A549 (cell line): ENCODE measurements at regions of chr15 and their contacts with region 1.

Region 1: DNA sequence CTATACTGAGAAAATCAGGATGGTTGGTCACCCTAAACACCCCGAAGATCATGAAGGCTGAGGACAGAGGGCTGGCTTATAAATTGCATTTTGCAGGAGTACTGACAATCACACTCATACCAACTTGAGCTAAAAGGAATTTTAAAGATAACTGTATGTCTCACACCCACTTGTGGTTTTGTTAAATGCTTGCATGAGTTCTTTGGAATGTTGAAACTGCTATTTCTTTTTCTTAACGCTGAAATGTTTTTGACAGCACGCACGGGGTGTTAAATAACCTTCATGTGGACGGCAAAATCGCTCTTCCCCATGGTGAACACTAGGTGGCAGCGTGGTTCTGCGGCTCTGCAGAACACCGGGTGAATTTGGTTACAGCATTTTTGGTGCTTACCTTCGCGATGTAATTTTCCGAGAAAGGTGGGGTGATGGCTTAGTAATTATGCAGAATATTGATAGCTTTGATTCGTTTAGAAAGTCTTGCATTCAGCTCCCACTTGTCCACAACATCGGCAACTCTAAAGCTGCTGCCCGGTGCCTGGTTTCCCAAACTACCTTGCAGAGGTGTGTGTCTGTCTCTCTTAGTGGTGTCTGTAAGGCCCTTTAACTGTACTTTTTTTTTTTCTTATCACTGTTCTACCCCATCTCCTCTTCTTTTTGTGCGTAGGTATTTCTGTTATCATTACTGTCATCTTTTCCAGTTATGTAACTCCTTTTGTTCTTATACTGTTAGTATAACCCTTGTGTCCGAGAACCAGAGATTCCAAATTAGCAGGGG is 51.7 kb downstream of the ARNT2 start:
- DNase-seq: peak; percentile 78 to 83
- ATAC-seq: peak; percentile 79 to 92
- H3K4me3 ChIP-seq: no peak overlapping the region
- H3K27ac ChIP-seq: no peak overlapping the region
- H3K4me1 ChIP-seq: peaks cover 14% of the 10 kb centered on the region
- CTCF ChIP-seq: peak; percentile 99
- EP300 ChIP-seq: no peak
- POLR2A ChIP-seq: no peak
- RAD21 ChIP-seq: peak; percentile 98 to 99

Region 2: GRCh38 chr15:80436511-80437307 is 19.1 kb before region 1 on chr15:
- CTCF ChIA-PET with region 1: interaction called, 20 read pairs
- POLR2A ChIA-PET with region 1: no interaction called
- DNase-seq: peak; percentile 77 to 89
- ATAC-seq: peak; percentile 91 to 95
- H3K4me3 ChIP-seq: no peak overlapping the region
- H3K27ac ChIP-seq: peak overlapping the region; percentile 64 to 82
- H3K4me1 ChIP-seq: peaks cover 25% of the 10 kb centered on the region
- CTCF ChIP-seq: no peak
- EP300 ChIP-seq: no peak
- POLR2A ChIP-seq: no peak
- RAD21 ChIP-seq: no peak

Region 3: DNA sequence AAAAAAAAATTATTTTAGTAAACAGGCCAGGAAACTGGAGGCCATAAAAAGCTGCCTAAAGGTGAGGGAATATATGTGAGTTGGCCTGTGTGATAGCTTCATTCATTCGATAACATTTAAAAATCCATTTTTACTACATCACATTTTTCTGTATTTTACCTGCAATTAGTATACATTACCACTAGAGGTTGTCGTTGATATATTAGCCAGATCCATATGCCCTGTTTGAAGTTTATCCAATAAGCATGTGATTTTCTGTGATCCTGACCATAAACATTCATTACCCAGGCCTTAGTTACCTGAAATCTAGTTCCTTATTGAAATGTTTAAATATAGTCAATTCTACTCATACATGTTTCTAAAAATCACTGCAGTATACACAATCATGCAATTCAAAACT is 19.7 kb after region 1 on chr15:
- CTCF ChIA-PET with region 1: interaction called, 125 read pairs
- POLR2A ChIA-PET with region 1: no interaction called
- DNase-seq: no peak
- ATAC-seq: no peak
- H3K4me3 ChIP-seq: no peak overlapping the region
- H3K27ac ChIP-seq: no peak overlapping the region
- H3K4me1 ChIP-seq: no peaks in the 10 kb centered on the region
- CTCF ChIP-seq: no peak
- EP300 ChIP-seq: no peak
- POLR2A ChIP-seq: no peak
- RAD21 ChIP-seq: peak in 1 of 2 experiments; percentile 35; a peak in 1 of 5 replicates

Region 4: DNA sequence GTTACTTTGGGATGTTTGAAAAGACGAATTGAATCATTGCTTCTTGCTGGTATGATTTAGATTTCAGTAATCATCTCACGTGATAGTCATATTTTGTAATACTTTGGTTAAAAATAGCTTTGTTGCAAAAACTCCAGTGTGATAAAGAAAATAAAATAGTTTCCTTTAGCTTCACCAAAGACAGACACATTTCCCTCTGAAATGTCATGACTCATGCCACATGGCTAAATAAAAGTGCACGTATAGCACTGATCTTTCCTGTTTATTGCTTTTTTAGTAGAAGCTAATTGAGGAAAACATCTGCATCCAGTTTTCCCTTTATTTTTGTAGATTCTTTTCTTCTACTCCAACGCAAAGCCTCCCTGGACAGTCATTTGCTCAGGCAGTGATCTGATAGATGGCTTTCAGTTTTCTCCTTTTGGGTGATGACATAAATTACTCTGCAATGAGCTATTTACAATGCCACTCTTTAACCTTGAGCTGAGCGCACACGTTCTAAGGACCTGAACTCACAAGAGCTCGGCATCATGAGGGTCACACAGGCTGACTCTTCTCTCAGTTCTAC is 33.3 kb after region 1 on chr15:
- CTCF ChIA-PET with region 1: interaction called, 33 read pairs
- POLR2A ChIA-PET with region 1: no interaction called
- DNase-seq: no peak
- ATAC-seq: no peak
- H3K4me3 ChIP-seq: no peak overlapping the region
- H3K27ac ChIP-seq: peak overlapping the region in 1 of 2 experiments; percentile 27; a peak in 3 of 6 replicates
- H3K4me1 ChIP-seq: peaks cover 36% of the 10 kb centered on the region
- CTCF ChIP-seq: no peak
- EP300 ChIP-seq: no peak
- POLR2A ChIP-seq: no peak
- RAD21 ChIP-seq: no peak

Region 5: GRCh38 chr15:80953936-80954778 is 498.3 kb after region 1 on chr15:
- CTCF ChIA-PET with region 1: interaction called, 18 read pairs
- POLR2A ChIA-PET with region 1: no interaction called
- DNase-seq: peak in 1 of 2 experiments; percentile 30
- ATAC-seq: no peak
- H3K4me3 ChIP-seq: no peak overlapping the region
- H3K27ac ChIP-seq: peak overlapping the region; percentile 12 to 70; a peak in 3 of 6 replicates
- H3K4me1 ChIP-seq: peaks cover 27% of the 10 kb centered on the region
- CTCF ChIP-seq: no peak
- EP300 ChIP-seq: no peak
- POLR2A ChIP-seq: no peak
- RAD21 ChIP-seq: no peak